Mammary epithelial cell (primary cell): ENCODE measurements at regions of chr12 and their contacts with region 1.

Region 1: DNA sequence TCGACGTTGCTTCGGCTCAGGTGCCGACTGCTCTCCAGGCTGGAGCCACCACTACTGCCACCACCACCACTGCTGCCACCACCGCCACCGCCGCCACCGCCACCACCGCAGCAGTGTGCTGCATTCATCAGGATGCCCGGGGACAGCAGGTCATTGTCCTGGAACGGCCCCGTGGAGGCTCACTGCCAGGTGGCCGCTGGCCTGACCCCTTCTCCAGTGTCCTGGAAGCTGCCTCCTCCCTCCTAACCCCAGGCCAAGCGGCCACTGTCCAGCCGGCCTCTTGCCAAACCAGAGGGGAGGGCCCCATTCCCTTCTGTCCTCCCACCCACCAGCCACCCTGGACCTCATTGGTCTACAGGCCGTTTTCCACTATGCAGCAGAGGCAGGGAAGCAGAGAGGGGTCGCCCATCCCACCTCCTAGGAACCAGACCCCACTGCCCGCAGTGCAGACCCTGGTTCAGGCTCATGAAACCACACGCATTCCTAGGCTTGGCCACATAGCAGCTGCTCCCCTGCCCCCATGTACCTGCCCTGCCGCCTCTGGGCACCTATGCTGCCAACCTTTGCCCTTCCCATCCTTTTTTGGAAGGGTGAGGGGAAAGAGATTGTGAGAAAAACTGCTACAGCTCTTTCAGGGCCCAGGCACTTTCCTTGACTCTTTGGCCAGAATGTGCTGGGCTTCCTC is 15.2 kb downstream of the ARL6IP4 start:
- DNase-seq: no peak
- H3K4me3 ChIP-seq: no peak overlapping the region
- H3K27ac ChIP-seq: no peak overlapping the region
- H3K4me1 ChIP-seq: no peaks in the 10 kb centered on the region
- H3K27me3 ChIP-seq: no peaks in the 10 kb centered on the region
- CTCF ChIP-seq: no peak

Region 2: GRCh38 chr12:122917504-122918121 is 78.0 kb before region 1 on chr12:
- CTCF ChIA-PET with region 1: no interaction called
- dilution Hi-C with region 1: no loop called
- in situ Hi-C with region 1: no loop called
- intact Hi-C with region 1: no loop called
- DNase-seq: peak; percentile 68
- H3K4me3 ChIP-seq: no peak overlapping the region
- H3K27ac ChIP-seq: peak overlapping the region; percentile 25
- H3K4me1 ChIP-seq: peaks cover 26% of the 10 kb centered on the region
- H3K27me3 ChIP-seq: no peaks in the 10 kb centered on the region
- CTCF ChIP-seq: no peak

Region 3: GRCh38 chr12:123062681-123063486 is 67.2 kb after region 1 on chr12:
- CTCF ChIA-PET with region 1: no interaction called
- dilution Hi-C with region 1: loop called (anchors 10 kb)
- in situ Hi-C with region 1: no loop called
- intact Hi-C with region 1: no loop called
- DNase-seq: peak; percentile 57
- H3K4me3 ChIP-seq: no peak overlapping the region
- H3K27ac ChIP-seq: no peak overlapping the region
- H3K4me1 ChIP-seq: peaks cover 17% of the 10 kb centered on the region
- H3K27me3 ChIP-seq: no peaks in the 10 kb centered on the region
- CTCF ChIP-seq: no peak